Activated CD4-positive, alpha-beta memory T cell treated with anti-CD3 and anti-CD28 coated beads, Interleukin-2, amount 10 ng/mL, durations not matched to agents 7 days and 5 days (primary cell): ENCODE measurements at regions of chr7 and their contacts with region 1.

Region 1: DNA sequence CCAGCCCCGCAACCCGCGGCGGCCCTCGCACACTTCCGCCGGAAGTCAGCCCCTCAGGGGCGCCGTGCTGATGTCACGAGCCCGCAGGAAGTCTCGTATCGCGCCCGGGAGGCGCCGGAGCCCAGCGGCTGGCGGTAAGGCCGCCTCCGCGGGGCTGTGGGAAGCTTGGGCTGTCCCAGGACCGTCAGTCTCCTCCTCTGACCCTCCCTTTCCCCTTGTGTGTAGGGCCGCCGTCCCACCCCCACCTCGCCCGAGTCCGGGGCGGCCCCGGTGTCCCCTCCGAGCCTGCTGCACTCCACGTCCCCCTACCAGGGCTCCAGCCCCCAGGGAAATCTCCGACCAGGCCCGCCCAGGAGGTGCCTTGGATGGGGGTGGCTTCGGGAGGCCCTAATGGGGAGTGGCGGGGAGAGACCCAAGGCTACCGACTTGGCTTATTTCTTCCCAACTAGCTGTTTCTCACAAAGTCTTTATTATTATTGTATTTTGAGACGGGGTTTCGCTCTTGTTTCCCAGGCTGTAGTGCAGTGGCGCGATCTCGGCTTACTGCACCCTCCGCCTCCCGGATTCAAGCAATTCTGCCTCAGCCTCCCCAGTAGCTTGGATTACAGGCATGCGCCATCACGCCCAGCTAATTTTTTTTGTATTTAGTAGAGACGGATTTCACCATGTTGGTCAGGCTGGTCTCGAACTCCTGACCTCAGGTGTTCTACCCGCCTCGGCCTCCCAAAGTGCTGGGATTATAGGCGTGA is at the start of gene ZDHHC4:
- DNase-seq: peak; percentile 88
- H3K4me3 Mint-ChIP-seq: peak within 1 kb of the TSS; percentile 84
- H3K27ac Mint-ChIP-seq: peak within 1 kb of the TSS; percentile 86
- H3K4me1 Mint-ChIP-seq: peaks cover 37% of the 10 kb centered on the region
- H3K27me3 Mint-ChIP-seq: no peaks in the 10 kb centered on the region
- total RNA-seq, gene ZDHHC4: 34.2 to 35.5 TPM

Region 2: DNA sequence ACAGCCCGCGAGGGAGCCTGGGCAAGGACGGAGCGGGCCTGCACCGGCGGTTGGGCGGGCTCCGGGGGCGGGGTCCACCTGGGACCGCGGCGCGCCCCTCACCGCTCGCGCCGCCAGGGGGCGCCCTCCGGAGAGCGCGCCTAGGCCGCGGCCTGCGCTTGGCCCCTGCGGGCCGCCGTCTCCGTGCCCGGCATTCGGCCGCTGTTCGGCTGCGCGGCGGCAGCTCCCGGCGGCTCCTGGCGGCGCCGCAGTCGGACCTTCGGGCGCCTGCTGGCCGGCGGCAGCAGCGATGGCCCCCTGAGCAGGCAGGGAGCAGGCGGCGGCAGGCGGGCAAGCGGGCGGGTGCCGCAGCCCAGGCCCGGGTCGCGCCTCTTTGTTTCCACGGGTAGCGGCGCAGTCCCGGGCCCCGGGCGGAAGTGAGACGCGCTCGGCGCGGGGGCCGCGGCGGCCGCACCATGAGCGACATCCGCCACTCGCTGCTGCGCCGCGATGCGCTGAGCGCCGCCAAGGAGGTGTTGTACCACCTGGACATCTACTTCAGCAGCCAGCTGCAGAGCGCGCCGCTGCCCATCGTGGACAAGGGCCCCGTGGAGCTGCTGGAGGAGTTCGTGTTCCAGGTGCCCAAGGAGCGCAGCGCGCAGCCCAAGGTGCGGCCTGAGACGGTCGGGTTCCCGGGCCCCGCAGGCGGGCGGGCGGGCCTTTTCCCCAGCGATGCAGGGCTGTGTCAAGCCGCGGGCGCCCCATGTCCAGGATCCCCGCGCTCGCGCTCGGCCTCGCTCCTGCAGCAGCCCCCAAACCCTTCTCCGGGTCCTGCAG is 12.5 kb after region 1 on chr7 and contains the start of gene INTS15:
- CTCF ChIA-PET with region 1: interaction called, 30 read pairs
- POLR2A ChIA-PET with region 1: interaction called, 49 read pairs
- DNase-seq: peak; percentile 85
- H3K4me3 Mint-ChIP-seq: peak within 1 kb of the TSS; percentile 96
- H3K27ac Mint-ChIP-seq: peak within 1 kb of the TSS; percentile 90
- H3K4me1 Mint-ChIP-seq: peaks cover 24% of the 10 kb centered on the region
- H3K27me3 Mint-ChIP-seq: no peaks in the 10 kb centered on the region
- total RNA-seq, gene INTS15: 30.0 to 31.6 TPM

Region 3: DNA sequence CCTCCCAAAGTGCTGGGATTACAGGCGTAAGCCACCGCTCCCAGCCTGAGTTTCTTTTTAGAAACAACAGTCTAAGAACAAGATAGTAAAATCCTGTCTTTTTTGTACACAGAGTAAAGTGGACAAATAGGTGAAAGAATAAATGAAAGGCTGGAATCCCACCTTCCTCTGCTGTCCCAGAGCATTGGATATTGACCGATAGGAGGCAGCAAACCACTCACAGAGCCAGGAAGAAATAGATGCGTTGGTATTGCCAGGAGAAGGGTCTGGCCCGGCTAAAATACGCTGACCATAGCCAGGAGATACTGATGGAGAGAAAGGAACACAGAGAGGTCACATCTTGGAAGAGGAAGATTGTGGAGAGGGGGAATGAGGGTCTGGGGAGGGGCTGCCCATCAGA is 140.6 kb after region 1 on chr7:
- CTCF ChIA-PET with region 1: no interaction called
- POLR2A ChIA-PET with region 1: no interaction called
- DNase-seq: no peak
- H3K4me3 Mint-ChIP-seq: no peak overlapping the region
- H3K27ac Mint-ChIP-seq: no peak overlapping the region
- H3K4me1 Mint-ChIP-seq: peaks cover 4% of the 10 kb centered on the region
- H3K27me3 Mint-ChIP-seq: peaks cover 30% of the 10 kb centered on the region